Panc1 (cell line): ENCODE measurements at regions of chr17 and their contacts with region 1.

Region 1: GRCh38 chr17:1496869-1497268 is 4.4 kb upstream of the MYO1C start:
- DNase-seq: no peak
- ATAC-seq: no peak
- H3K4me3 ChIP-seq: no peak overlapping the region
- H3K27ac ChIP-seq: no peak overlapping the region
- H3K4me1 ChIP-seq: peaks cover 16% of the 10 kb centered on the region
- H3K27me3 ChIP-seq: no peaks in the 10 kb centered on the region
- CTCF ChIP-seq: no peak

Region 2: DNA sequence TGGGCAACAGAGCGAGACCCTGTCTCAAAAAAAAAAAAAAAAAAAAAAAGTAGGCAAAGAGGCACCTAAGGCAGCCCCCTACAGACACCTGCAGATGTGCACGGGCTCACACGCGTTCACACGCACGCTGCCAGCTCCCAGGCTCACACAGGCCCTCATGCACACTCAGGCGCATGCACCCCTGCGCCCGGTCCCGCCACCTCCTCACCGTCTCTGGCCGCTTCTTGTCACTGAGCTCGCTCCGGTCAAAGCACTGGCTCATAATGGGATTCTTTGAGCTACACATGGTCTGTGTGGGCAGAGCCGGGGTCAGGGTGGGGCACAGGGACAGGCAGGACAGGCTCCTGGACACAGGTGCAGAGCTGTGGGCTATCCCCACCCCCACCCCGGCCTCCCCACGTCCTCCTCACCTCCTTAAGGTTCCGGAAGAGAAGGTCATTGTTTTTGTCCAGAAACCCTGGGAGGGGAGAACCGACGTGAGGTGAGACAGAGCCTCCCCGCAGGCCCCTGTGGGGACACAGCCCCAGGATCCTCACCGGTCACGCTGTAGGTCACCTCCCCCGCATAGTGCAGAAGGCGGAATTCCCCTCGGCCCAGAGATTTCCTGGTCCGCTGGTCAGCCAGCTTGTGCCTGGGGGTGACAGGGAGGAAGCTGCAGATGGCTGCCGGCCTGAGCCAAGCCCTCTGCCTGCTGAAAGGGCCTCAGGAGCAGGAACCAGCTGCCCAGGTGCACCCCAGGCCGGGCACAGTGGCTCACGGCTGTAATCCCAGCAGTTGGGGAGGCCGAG is 22.3 kb before region 1 on chr17:
- CTCF ChIA-PET with region 1: no interaction called
- POLR2A ChIA-PET with region 1: no interaction called
- in situ Hi-C with region 1: no loop called
- intact Hi-C with region 1: no loop called
- DNase-seq: no peak
- ATAC-seq: peak; percentile 21; the same call in 1 of the 2 replicates
- H3K4me3 ChIP-seq: no peak overlapping the region
- H3K27ac ChIP-seq: no peak overlapping the region
- H3K4me1 ChIP-seq: peaks cover 2% of the 10 kb centered on the region; the same call in 1 of the 2 replicates
- H3K27me3 ChIP-seq: no peaks in the 10 kb centered on the region
- CTCF ChIP-seq: no peak

Region 3: GRCh38 chr17:1561400-1562175 is 64.7 kb after region 1 on chr17:
- CTCF ChIA-PET with region 1: no interaction called
- POLR2A ChIA-PET with region 1: no interaction called
- in situ Hi-C with region 1: no loop called
- intact Hi-C with region 1: no loop called
- DNase-seq: no peak
- ATAC-seq: peak; percentile 31
- H3K4me3 ChIP-seq: peak overlapping the region; percentile 56 to 64
- H3K27ac ChIP-seq: 0 out of 2 replicates have a peak overlapping the region, but pooled peaks have one; percentile 57
- H3K4me1 ChIP-seq: peaks cover 4% of the 10 kb centered on the region; the same call in 1 of the 2 replicates
- H3K27me3 ChIP-seq: no peaks in the 10 kb centered on the region
- CTCF ChIP-seq: no peak

Region 4: DNA sequence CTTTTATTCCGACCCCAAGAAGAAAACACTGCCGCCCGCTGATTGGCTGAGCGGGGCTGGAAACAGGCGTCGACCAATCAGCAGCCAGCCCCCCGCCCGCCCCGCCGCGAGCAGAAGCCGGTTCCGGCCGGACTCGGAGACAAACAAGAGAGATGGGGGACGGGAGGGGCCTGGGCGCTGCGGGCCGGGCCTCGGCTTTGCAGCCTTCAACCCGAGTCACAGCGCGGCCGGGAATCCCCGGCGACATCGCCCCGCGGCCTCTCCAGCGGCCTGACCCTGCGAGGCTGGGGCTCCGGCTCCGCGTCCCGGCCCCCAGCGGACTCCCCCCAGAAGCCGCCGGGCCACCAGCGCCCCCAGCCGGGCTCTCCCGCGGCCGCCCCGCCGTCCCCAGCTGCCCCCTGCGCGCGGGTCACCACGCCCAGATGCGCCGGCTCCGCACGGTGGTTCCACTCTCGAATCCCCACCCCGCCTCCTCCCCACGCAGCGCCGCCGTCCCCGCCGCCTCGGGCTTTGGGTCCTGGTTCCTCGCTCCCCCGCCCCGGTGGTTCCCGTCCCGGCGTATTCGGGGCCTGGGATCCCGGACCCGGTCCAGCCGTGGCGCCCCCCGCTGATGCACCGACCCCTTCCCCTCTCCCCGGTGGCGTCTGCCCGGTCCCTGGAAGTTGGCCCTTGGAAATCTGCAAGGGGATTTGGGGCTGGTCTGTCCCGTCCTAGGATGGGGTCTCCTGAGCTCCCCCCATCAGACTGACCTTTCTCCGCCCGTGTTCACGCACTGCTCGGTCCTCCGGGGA is 132.2 kb after region 1 on chr17:
- CTCF ChIA-PET with region 1: no interaction called
- POLR2A ChIA-PET with region 1: interaction called, 16 read pairs
- in situ Hi-C with region 1: no loop called
- intact Hi-C with region 1: no loop called
- DNase-seq: no peak
- ATAC-seq: peak; percentile 92
- H3K4me3 ChIP-seq: peak overlapping the region; percentile 68
- H3K27ac ChIP-seq: peak overlapping the region; percentile 44
- H3K4me1 ChIP-seq: peaks cover 8% of the 10 kb centered on the region
- H3K27me3 ChIP-seq: no peaks in the 10 kb centered on the region
- CTCF ChIP-seq: peak; percentile 79; the same call in 1 of the 2 replicates